Heart left ventricle (tissue), 16 donors: ENCODE measurements at regions of chr19 and their contacts with region 1.

Region 1: GRCh38 chr19:42038666-42039065 is 31.3 kb downstream of the GRIK5 start:
- DNase-seq: peak in 4 of 5 donors; percentile 74 to 91 (median 82)
- ATAC-seq: peak; percentile 91 to 95 (median 94)
- H3K4me3 ChIP-seq: no peak overlapping the region
- H3K27ac ChIP-seq: peak overlapping the region in 11 of 12 donors; percentile 24 to 94 (median 72)
- H3K4me1 ChIP-seq: peaks cover 0 to 41% (median 10%) of the 10 kb centered on the region in 12 donors
- H3K27me3 ChIP-seq: no peaks in the 10 kb centered on the region
- CTCF ChIP-seq: no peak
- POLR2A ChIP-seq: peak in 1 of 2 donors; percentile 40

Region 2: GRCh38 chr19:42075616-42076379 is 37.1 kb after region 1 on chr19 and contains the start of gene ZNF574:
- intact Hi-C with region 1: loop called in 1 of 10 experiments (anchors 1 kb)
- DNase-seq: peak; percentile 98 to 99 (median 99)
- ATAC-seq: peak; percentile 98 to 100 (median 99)
- H3K4me3 ChIP-seq: peak within 1 kb of the TSS; percentile 62 to 96 (median 86)
- H3K27ac ChIP-seq: peak within 1 kb of the TSS; percentile 89 to 99 (median 94)
- H3K4me1 ChIP-seq: peaks cover 0 to 26% (median 17%) of the 10 kb centered on the region in 12 donors
- H3K27me3 ChIP-seq: no peaks in the 10 kb centered on the region
- CTCF ChIP-seq: no peak
- POLR2A ChIP-seq: peak in 1 of 2 donors; percentile 74
- total RNA-seq, gene ZNF574: 6.3 to 17.7 (median 8.8) TPM